ENCODE measurements at regions of chr9 and their contacts with region 1.

Region 1: GRCh38 chr9:91775011-91775707 is 174.9 kb downstream of the ROR2 start:
- DNase-seq: peak; percentile 73
- H3K4me3 Mint-ChIP-seq: no peak overlapping the region
- H3K27ac Mint-ChIP-seq: no peak overlapping the region
- H3K4me1 Mint-ChIP-seq: peaks cover 54% of the 10 kb centered on the region
- H3K27me3 Mint-ChIP-seq: no peaks in the 10 kb centered on the region
- CTCF ChIP-seq: peak; percentile 79

Region 2: DNA sequence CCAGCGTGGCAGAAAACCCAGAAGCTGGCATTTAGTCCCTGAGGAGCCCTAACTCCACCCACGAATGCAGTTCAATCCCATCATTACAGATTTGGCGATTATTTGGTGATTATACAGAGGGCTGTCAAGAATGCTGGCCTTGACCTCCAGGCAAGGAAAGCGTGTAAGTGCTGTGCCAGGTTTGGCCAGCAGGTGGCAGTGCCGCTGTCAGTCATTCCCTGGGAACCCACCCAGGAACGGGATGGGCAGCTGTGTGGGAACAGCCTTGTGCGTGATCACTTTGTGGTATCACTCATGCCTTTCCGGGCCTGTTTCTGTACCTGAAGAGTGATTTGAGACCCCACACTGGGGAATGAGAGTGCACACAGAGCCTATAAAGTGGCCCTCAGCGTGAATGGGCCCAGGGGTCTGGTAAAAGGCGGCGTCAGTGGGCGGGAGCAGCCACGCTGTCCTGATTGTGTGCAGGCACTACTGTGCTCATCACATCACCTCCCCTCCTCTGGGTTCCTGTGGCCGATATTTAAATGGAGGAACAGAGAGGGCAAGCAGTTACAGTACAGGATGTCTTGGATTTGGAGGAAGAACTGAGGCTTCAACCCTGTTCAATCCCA is 40.7 kb before region 1 on chr9:
- CTCF ChIA-PET with region 1: interaction called, 12 read pairs
- POLR2A ChIA-PET with region 1: interaction called, 3 read pairs
- intact Hi-C with region 1: no loop called
- DNase-seq: peak; percentile 45
- H3K4me3 Mint-ChIP-seq: no peak overlapping the region
- H3K27ac Mint-ChIP-seq: no peak overlapping the region
- H3K4me1 Mint-ChIP-seq: no peaks in the 10 kb centered on the region
- H3K27me3 Mint-ChIP-seq: no peaks in the 10 kb centered on the region
- CTCF ChIP-seq: peak; percentile 92

Region 3: GRCh38 chr9:91865041-91865440 is 89.9 kb after region 1 on chr9:
- CTCF ChIA-PET with region 1: no interaction called
- POLR2A ChIA-PET with region 1: no interaction called
- intact Hi-C with region 1: no loop called
- DNase-seq: no peak
- H3K4me3 Mint-ChIP-seq: no peak overlapping the region
- H3K27ac Mint-ChIP-seq: no peak overlapping the region
- H3K4me1 Mint-ChIP-seq: no peaks in the 10 kb centered on the region
- H3K27me3 Mint-ChIP-seq: peaks cover 49% of the 10 kb centered on the region
- CTCF ChIP-seq: no peak

Region 4: DNA sequence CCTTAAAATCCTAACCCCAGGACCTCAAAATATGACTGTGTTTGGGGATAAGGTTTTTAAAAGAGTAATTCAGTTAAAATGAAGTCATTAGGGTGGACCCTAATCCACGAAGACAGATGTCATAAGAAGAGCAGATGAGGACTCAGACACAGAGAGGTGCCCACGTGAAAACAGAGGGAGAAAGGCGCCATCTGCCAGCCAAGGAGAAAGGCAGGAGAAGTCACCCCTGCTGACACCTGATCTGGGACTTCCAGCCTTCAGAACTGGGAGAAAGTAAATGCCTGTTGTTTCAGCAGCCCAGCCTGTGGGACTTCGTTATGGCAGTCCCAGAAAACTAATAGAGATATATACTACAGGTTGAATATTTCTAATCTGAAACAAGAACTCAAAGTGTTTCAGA is 107.5 kb after region 1 on chr9:
- CTCF ChIA-PET with region 1: no interaction called
- POLR2A ChIA-PET with region 1: no interaction called
- intact Hi-C with region 1: loop called (anchors 1 kb)
- DNase-seq: peak; percentile 43
- H3K4me3 Mint-ChIP-seq: no peak overlapping the region
- H3K27ac Mint-ChIP-seq: no peak overlapping the region
- H3K4me1 Mint-ChIP-seq: no peaks in the 10 kb centered on the region
- H3K27me3 Mint-ChIP-seq: peaks cover 9% of the 10 kb centered on the region
- CTCF ChIP-seq: no peak

Region 5: DNA sequence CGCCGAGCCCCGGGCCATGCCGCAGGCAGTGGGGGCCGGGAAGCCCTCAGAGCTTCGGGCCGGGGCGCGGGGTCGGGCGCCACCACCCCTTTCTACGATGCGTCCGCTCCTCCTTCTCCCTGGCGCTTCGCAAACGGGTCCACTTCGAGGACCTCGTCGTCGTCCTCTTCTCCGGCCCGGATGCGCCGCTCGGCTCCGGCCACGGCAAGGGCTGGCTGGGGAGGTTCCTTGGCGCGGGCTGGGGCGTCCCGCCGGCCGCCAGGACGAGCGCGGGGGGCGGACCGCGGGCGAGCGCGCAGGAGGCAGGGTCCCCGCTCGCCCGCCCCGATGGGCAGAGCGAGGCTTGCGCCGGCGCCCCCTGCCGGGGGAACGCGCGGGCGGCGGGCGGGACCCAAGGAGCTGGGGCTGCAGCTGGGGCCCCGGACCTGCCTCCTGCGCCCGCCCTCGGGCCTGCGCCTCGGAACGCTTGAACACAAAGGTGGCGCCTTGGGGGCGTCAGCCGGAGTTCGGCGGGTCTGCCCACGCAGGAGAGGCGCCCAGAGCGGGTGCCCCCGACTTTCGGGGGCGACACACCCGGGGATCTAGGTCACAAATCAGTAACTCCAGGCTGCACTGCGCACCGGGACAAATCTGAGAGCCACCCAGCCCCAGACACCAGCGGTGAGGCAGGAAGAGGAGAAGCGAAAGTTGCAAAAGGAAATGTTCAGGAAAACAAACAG is 174.9 kb after region 1 on chr9 and contains the start of gene ROR2:
- CTCF ChIA-PET with region 1: interaction called, 11 read pairs
- POLR2A ChIA-PET with region 1: no interaction called
- intact Hi-C with region 1: no loop called
- DNase-seq: no peak
- H3K4me3 Mint-ChIP-seq: peak within 1 kb of the TSS; percentile 62
- H3K27ac Mint-ChIP-seq: no peak within 1 kb of the TSS
- H3K4me1 Mint-ChIP-seq: peaks cover 8% of the 10 kb centered on the region
- H3K27me3 Mint-ChIP-seq: peaks cover 29% of the 10 kb centered on the region
- CTCF ChIP-seq: peak; percentile 44
- total RNA-seq, gene ROR2: 0.10 and 0.84 TPM in 2 replicates

Region 6: GRCh38 chr9:92029553-92029952 is 254.4 kb after region 1 on chr9:
- CTCF ChIA-PET with region 1: no interaction called
- POLR2A ChIA-PET with region 1: no interaction called
- intact Hi-C with region 1: loop called (anchors 10 kb)
- DNase-seq: no peak
- H3K4me3 Mint-ChIP-seq: no peak overlapping the region
- H3K27ac Mint-ChIP-seq: no peak overlapping the region
- H3K4me1 Mint-ChIP-seq: no peaks in the 10 kb centered on the region
- H3K27me3 Mint-ChIP-seq: no peaks in the 10 kb centered on the region
- CTCF ChIP-seq: no peak

Region 7: DNA sequence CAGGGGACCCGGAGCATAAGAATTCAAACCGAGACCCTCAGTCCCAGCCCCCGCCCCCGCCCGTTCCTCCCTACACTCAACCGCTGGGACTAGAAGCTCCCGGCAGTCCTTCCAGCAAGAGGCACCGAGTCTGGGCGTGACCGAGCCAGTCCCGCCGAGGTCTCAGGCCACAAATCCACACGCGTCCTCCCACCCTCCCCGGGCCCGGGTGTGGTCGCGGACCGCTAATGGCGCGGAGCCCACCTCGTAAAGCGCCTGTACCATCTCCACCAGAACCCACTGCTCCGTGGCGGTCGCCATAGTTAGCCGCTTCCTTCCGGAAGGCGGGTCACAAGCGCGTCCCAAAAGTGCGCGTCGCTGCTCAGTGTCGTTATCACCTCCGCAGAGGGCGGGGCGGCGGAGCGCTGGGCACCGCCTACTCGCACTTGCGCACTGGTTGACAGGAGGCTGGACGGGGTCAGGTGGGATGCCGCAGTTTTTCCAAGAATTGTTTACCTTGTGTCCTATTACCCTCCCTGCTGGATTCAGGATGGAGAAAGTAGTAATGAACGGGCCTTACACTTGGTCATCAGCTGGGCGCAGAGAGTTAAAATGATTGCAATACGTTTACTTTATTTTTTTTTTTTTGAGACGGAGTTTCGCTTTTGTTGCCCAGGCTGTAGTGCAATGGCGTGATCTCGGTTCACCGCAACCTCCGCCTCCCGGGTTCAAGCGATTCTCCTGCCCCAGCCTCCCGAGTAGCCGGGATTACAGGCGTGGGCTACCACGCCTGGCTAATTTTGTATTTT is 340.1 kb after region 1 on chr9 and contains the start of gene SPTLC1:
- CTCF ChIA-PET with region 1: no interaction called
- POLR2A ChIA-PET with region 1: no interaction called
- intact Hi-C with region 1: loop called (anchors 5 kb)
- DNase-seq: peak; percentile 92
- H3K4me3 Mint-ChIP-seq: peak within 1 kb of the TSS; percentile 95
- H3K27ac Mint-ChIP-seq: peak within 1 kb of the TSS; percentile 99
- H3K4me1 Mint-ChIP-seq: peaks cover 15% of the 10 kb centered on the region
- H3K27me3 Mint-ChIP-seq: no peaks in the 10 kb centered on the region
- CTCF ChIP-seq: no peak
- total RNA-seq, gene SPTLC1: 65.5 and 68.0 TPM in 2 replicates

Measured in MCF 10A (cell line).